ENCODE measurements at regions of chr3 and their contacts with region 1.

Region 1: GRCh38 chr3:184777336-184778004 is 34.5 kb upstream of the VPS8 start:
- DNase-seq: peak; percentile 35 to 84 (median 78)
- ATAC-seq: peak; percentile 96
- H3K4me3 ChIP-seq: no peak overlapping the region
- H3K4me3 Mint-ChIP-seq: no peak overlapping the region
- H3K27ac ChIP-seq: no peak overlapping the region
- H3K27ac Mint-ChIP-seq: no peak overlapping the region
- H3K4me1 ChIP-seq: no peaks in the 10 kb centered on the region
- H3K4me1 Mint-ChIP-seq: peaks cover 0 to 3% (median 0%) of the 10 kb centered on the region in 7 donors
- H3K27me3 ChIP-seq: peaks cover 0 to 4% of the 10 kb centered on the region in 2 donors
- H3K27me3 Mint-ChIP-seq: peaks cover 6 to 28% (median 19%) of the 10 kb centered on the region in 5 donors

Region 2: GRCh38 chr3:183895296-183895695 is 882.2 kb before region 1 on chr3:
- CTCF ChIA-PET with region 1: no interaction called
- POLR2A ChIA-PET with region 1: no interaction called
- intact Hi-C with region 1: loop called in 1 of 2 experiments (anchors 1 kb)
- DNase-seq: peak in 7 of 9 donors; percentile 19 to 67 (median 49)
- ATAC-seq: peak; percentile 91
- H3K4me3 ChIP-seq: no peak overlapping the region
- H3K4me3 Mint-ChIP-seq: no peak overlapping the region
- H3K27ac ChIP-seq: no peak overlapping the region
- H3K27ac Mint-ChIP-seq: peak overlapping the region in 1 of 9 donors; percentile 18
- H3K4me1 ChIP-seq: no peaks in the 10 kb centered on the region
- H3K4me1 Mint-ChIP-seq: peaks cover 0 to 6% (median 0%) of the 10 kb centered on the region in 7 donors
- H3K27me3 ChIP-seq: peaks cover 0 to 3% of the 10 kb centered on the region in 2 donors
- H3K27me3 Mint-ChIP-seq: peaks cover 7 to 29% (median 11%) of the 10 kb centered on the region in 5 donors

Region 3: DNA sequence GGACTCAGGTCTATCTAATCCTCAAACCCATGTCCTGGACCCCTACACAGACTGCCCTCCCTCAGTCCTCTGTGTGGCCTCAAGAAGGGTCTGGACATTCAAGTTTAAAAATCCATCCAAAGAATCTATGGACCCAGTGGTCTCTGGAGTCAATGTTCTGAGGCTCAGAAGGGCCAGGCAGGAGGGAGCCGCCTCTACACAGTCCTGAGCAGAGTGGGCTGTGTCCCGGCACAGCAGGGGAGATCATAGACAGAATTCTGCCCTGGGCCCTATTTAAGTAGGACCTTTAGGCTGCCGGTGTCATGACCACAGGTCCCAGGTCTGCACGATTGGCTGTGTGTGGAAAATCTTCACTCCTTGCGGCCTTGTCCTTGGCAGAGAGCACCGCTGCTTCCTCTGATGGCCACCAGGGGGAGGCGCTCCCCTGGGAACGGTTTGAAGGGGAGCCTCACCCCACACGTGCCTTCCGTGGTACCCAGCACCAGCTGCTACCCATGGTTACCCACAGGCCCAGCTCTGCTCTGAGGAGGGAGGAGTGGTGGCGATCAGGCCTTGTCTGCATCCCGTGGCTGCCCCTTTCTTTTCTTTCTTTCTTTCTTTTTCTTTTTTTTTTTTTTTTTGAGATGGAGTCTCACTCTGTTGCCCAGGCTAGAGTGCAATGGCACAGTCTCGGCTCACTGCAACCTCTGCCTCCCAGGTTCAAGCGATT is 359.7 kb before region 1 on chr3:
- CTCF ChIA-PET with region 1: interaction called, 4 read pairs
- POLR2A ChIA-PET with region 1: no interaction called
- intact Hi-C with region 1: loop called in 1 of 2 experiments (anchors 5 kb)
- DNase-seq: peak; percentile 48 to 76 (median 70)
- ATAC-seq: peak; percentile 96
- H3K4me3 ChIP-seq: no peak overlapping the region
- H3K4me3 Mint-ChIP-seq: no peak overlapping the region
- H3K27ac ChIP-seq: no peak overlapping the region
- H3K27ac Mint-ChIP-seq: no peak overlapping the region
- H3K4me1 ChIP-seq: no peaks in the 10 kb centered on the region
- H3K4me1 Mint-ChIP-seq: no peaks in the 10 kb centered on the region
- H3K27me3 ChIP-seq: no peaks in the 10 kb centered on the region
- H3K27me3 Mint-ChIP-seq: peaks cover 0 to 6% (median 2%) of the 10 kb centered on the region in 5 donors

Region 4: GRCh38 chr3:184561061-184561912 is 216.2 kb before region 1 on chr3 and contains the start of gene EPHB3:
- CTCF ChIA-PET with region 1: interaction called, 11 read pairs
- POLR2A ChIA-PET with region 1: no interaction called
- intact Hi-C with region 1: loop called (anchors 1 kb)
- DNase-seq: peak; percentile 81 to 90 (median 89)
- ATAC-seq: peak; percentile 92
- H3K4me3 ChIP-seq: peak within 1 kb of the TSS; percentile 55
- H3K4me3 Mint-ChIP-seq: peak within 1 kb of the TSS; percentile 66 to 87 (median 81)
- H3K27ac ChIP-seq: no peak within 1 kb of the TSS
- H3K27ac Mint-ChIP-seq: peak within 1 kb of the TSS in 8 of 9 donors; percentile 59 to 84 (median 68)
- H3K4me1 ChIP-seq: peaks cover 14 to 44% of the 10 kb centered on the region in 2 donors
- H3K4me1 Mint-ChIP-seq: peaks cover 18 to 56% (median 41%) of the 10 kb centered on the region in 7 donors
- H3K27me3 ChIP-seq: peaks cover 0 to 9% of the 10 kb centered on the region in 2 donors
- H3K27me3 Mint-ChIP-seq: peaks cover 16 to 73% (median 35%) of the 10 kb centered on the region in 5 donors
- total RNA-seq, gene EPHB3: 0.07 to 0.49 (median 0.32) TPM

Region 5: GRCh38 chr3:184711493-184712247 is 65.8 kb before region 1 on chr3 and contains the start of gene MAGEF1:
- CTCF ChIA-PET with region 1: no interaction called
- POLR2A ChIA-PET with region 1: no interaction called
- intact Hi-C with region 1: loop called in 1 of 2 experiments (anchors 1 kb)
- DNase-seq: peak; percentile 34 to 78 (median 69)
- ATAC-seq: peak; percentile 87
- H3K4me3 ChIP-seq: peak within 1 kb of the TSS; percentile 70
- H3K4me3 Mint-ChIP-seq: peak within 1 kb of the TSS; percentile 81 to 99 (median 93)
- H3K27ac ChIP-seq: peak within 1 kb of the TSS; percentile 77
- H3K27ac Mint-ChIP-seq: peak within 1 kb of the TSS; percentile 69 to 99 (median 87)
- H3K4me1 ChIP-seq: peaks cover 10 to 17% of the 10 kb centered on the region in 2 donors
- H3K4me1 Mint-ChIP-seq: peaks cover 28 to 44% (median 34%) of the 10 kb centered on the region in 7 donors
- H3K27me3 ChIP-seq: no peaks in the 10 kb centered on the region
- H3K27me3 Mint-ChIP-seq: peaks cover 0 to 20% (median 0%) of the 10 kb centered on the region in 5 donors
- total RNA-seq, gene MAGEF1: 9.0 to 17.4 (median 13.3) TPM

Region 6: DNA sequence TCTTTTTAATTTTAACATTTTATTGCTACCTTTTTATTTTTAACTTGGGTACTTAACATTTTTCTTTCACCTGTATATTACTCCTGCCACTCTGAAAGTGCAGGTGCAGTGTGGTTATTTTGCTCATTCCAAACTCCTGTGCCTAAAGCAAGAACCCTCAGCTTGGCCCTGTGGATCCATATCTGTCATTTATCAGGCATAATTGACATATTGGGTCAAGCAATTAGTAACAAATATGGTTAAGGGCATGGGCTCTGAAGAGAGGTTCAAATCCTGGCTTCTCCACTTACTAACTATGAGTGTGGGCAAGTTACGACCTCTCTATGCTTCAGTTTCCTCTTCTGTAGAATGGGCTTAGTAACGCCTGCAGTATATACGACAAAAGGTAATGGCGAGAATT is 24.7 kb after region 1 on chr3:
- CTCF ChIA-PET with region 1: interaction called, 4 read pairs
- POLR2A ChIA-PET with region 1: no interaction called
- intact Hi-C with region 1: loop called in 1 of 2 experiments (anchors 2 kb)
- DNase-seq: no peak
- ATAC-seq: no peak
- H3K4me3 ChIP-seq: no peak overlapping the region
- H3K4me3 Mint-ChIP-seq: no peak overlapping the region
- H3K27ac ChIP-seq: no peak overlapping the region
- H3K27ac Mint-ChIP-seq: no peak overlapping the region
- H3K4me1 ChIP-seq: no peaks in the 10 kb centered on the region
- H3K4me1 Mint-ChIP-seq: peaks cover 0 to 3% (median 0%) of the 10 kb centered on the region in 7 donors
- H3K27me3 ChIP-seq: no peaks in the 10 kb centered on the region
- H3K27me3 Mint-ChIP-seq: peaks cover 16 to 38% (median 28%) of the 10 kb centered on the region in 5 donors

Measured in naive thymus-derived CD4-positive, alpha-beta T cell (primary cell).